ENCODE measurements at regions of chr10 and their contacts with region 1.

Region 1: DNA sequence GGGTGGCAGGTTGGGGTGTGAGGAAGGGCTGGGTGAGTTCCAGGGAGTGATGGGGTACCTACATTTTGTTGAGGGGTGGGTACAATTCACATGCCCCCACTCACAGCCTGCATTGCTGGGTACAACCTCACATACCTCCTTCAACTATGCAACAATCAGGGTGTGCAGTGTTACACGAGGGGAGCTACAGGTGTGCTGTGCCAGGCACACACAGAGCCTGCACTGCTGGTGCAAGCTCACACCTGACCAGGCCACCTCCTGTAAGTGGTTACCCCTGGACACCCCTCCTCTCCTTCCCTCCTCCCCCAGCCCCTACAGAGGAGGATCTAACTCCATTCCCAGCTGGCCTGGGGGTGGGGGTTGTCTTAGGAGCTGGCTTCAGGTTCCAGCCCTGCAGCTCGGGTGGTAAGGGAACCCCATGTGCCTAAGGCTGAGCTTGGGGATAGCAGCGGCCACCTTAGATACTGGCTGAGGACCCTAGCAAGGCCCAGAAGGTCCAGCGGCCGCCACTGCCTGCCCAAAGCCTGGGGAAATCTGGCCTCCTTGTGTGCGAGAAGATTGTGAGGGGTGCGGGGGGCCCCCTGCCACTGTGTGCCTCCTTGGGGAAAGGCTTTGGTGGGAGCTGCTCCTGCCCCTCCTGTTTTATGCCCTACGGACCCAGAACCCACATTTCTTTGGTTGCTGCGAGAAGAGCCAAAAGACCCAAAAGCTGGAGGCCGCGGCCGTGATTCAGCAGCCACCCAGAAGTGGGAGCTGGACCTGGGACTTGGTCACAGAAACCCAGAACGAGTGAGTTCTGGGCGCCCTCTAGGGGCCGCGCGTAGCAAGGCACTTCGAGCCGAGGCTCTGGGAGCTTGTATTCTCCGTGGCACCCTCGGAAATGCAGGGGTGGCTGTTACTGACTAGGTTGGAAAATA is 10.8 kb downstream of the TLX1 start:
- DNase-seq: peak; percentile 88
- ATAC-seq: peak; percentile 88
- H3K4me3 ChIP-seq: no peak overlapping the region
- H3K4me3 Mint-ChIP-seq: no peak overlapping the region
- H3K27ac ChIP-seq: no peak overlapping the region
- H3K27ac Mint-ChIP-seq: no peak overlapping the region
- H3K4me1 ChIP-seq: peaks cover 34 to 46% of the 10 kb centered on the region in 2 donors
- H3K4me1 Mint-ChIP-seq: peaks cover 24% of the 10 kb centered on the region
- H3K27me3 ChIP-seq: peaks cover 0 to 92% (median 68%) of the 10 kb centered on the region in 4 experiments
- H3K27me3 Mint-ChIP-seq: peaks cover 73% of the 10 kb centered on the region
- CTCF ChIP-seq: peak; percentile 98

Region 2: GRCh38 chr10:101031128-101031795 is 110.6 kb before region 1 on chr10 and contains the starts of genes PDZD7 and SFXN3:
- CTCF ChIA-PET with region 1: interaction called, 10 read pairs
- POLR2A ChIA-PET with region 1: no interaction called
- intact Hi-C with region 1: no loop called
- DNase-seq: peak; percentile 95
- ATAC-seq: peak; percentile 89
- H3K4me3 ChIP-seq: peak within 1 kb of the TSS; percentile 26 to 96 (median 79)
- H3K4me3 Mint-ChIP-seq: peak within 1 kb of the TSS; percentile 88
- H3K27ac ChIP-seq: peak within 1 kb of the TSS; percentile 63 to 65
- H3K27ac Mint-ChIP-seq: peak within 1 kb of the TSS; percentile 90
- H3K4me1 ChIP-seq: peaks cover 14 to 26% of the 10 kb centered on the region in 2 donors
- H3K4me1 Mint-ChIP-seq: peaks cover 19% of the 10 kb centered on the region
- H3K27me3 ChIP-seq: peaks cover 0 to 29% (median 13%) of the 10 kb centered on the region in 4 experiments
- H3K27me3 Mint-ChIP-seq: peaks cover 15% of the 10 kb centered on the region
- CTCF ChIP-seq: no peak
- total RNA-seq, gene PDZD7: 0.69 and 0.85 TPM in 2 replicates
- total RNA-seq, gene SFXN3: 38.0 and 44.2 TPM in 2 replicates

Region 3: DNA sequence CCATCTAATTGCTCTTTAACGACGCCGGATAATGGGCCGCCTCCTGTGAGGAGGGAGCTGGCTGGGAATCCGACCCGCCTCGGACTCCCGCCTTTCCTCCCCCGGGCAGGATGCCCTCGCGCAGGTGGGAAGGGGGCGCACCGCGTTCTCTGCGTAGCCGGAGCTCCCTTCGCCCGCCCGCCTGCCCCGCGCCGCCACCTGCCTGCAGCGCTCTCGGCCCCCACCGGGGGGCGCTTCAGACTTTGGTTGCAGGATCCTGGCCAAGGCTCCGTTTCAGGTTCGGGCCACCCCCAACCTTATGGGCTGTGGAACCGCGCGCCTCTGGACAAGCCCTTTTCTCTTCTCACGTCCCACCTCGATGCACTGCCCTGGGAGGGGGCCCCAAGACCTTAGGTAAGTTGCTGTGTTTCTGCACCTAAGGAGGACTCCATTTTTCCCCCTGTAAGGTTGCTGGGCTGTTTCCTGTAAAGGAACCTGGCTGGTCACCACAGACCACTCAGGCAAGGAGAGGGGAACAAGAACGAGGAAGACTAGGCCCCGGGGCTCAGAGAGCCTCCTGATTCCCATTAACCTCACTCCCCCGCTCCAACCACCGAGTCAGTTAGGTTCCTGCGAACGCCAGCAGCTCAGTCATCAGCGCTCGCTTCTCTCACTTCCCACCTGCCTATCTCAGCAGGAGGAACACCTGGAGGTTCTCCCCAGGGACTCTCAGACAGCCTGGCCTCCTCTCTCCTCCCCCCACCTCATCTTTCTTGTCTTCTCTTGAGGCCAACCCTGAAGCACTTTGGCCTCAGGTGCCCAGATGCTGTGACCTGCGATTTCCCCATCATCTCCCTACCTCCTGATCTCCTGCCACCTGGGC is 91.4 kb before region 1 on chr10:
- CTCF ChIA-PET with region 1: interaction called, 127 read pairs
- POLR2A ChIA-PET with region 1: no interaction called
- intact Hi-C with region 1: no loop called
- DNase-seq: peak; percentile 84
- ATAC-seq: peak; percentile 96
- H3K4me3 ChIP-seq: peak overlapping the region in 2 of 5 experiments; percentile 13 to 41
- H3K4me3 Mint-ChIP-seq: peak overlapping the region; percentile 53
- H3K27ac ChIP-seq: no peak overlapping the region
- H3K27ac Mint-ChIP-seq: no peak overlapping the region
- H3K4me1 ChIP-seq: peaks cover 9 to 11% of the 10 kb centered on the region in 2 donors
- H3K4me1 Mint-ChIP-seq: peaks cover 16% of the 10 kb centered on the region
- H3K27me3 ChIP-seq: peaks cover 0 to 50% (median 24%) of the 10 kb centered on the region in 4 experiments
- H3K27me3 Mint-ChIP-seq: peaks cover 37% of the 10 kb centered on the region
- CTCF ChIP-seq: peak; percentile 87

Region 4: GRCh38 chr10:101075775-101076174 is 66.1 kb before region 1 on chr10:
- CTCF ChIA-PET with region 1: interaction called, 17 read pairs
- POLR2A ChIA-PET with region 1: no interaction called
- intact Hi-C with region 1: no loop called
- DNase-seq: no peak
- ATAC-seq: no peak
- H3K4me3 ChIP-seq: no peak overlapping the region
- H3K4me3 Mint-ChIP-seq: no peak overlapping the region
- H3K27ac ChIP-seq: no peak overlapping the region
- H3K27ac Mint-ChIP-seq: no peak overlapping the region
- H3K4me1 ChIP-seq: peaks cover 22 to 31% of the 10 kb centered on the region in 2 donors
- H3K4me1 Mint-ChIP-seq: peaks cover 24% of the 10 kb centered on the region
- H3K27me3 ChIP-seq: peaks cover 0 to 45% (median 24%) of the 10 kb centered on the region in 4 experiments
- H3K27me3 Mint-ChIP-seq: peaks cover 44% of the 10 kb centered on the region
- CTCF ChIP-seq: no peak

Region 5: GRCh38 chr10:101120884-101121653 is 20.8 kb before region 1 on chr10:
- CTCF ChIA-PET with region 1: interaction called, 24 read pairs
- POLR2A ChIA-PET with region 1: interaction called, 3 read pairs
- intact Hi-C with region 1: no loop called
- DNase-seq: peak; percentile 68
- ATAC-seq: peak; percentile 83
- H3K4me3 ChIP-seq: peak overlapping the region; percentile 51 to 91 (median 68)
- H3K4me3 Mint-ChIP-seq: peak overlapping the region; percentile 94
- H3K27ac ChIP-seq: no peak overlapping the region
- H3K27ac Mint-ChIP-seq: peak overlapping the region; percentile 82
- H3K4me1 ChIP-seq: peaks cover 32% of the 10 kb centered on the region in 2 donors
- H3K4me1 Mint-ChIP-seq: peaks cover 33% of the 10 kb centered on the region
- H3K27me3 ChIP-seq: peaks cover 0 to 67% (median 43%) of the 10 kb centered on the region in 4 experiments
- H3K27me3 Mint-ChIP-seq: peaks cover 52% of the 10 kb centered on the region
- CTCF ChIP-seq: no peak

Region 6: GRCh38 chr10:101161494-101162299 is 19.8 kb after region 1 on chr10:
- CTCF ChIA-PET with region 1: interaction called, 63 read pairs
- POLR2A ChIA-PET with region 1: no interaction called
- intact Hi-C with region 1: no loop called
- DNase-seq: peak; percentile 82
- ATAC-seq: peak; percentile 88
- H3K4me3 ChIP-seq: no peak overlapping the region
- H3K4me3 Mint-ChIP-seq: peak overlapping the region; percentile 18
- H3K27ac ChIP-seq: no peak overlapping the region
- H3K27ac Mint-ChIP-seq: no peak overlapping the region
- H3K4me1 ChIP-seq: peaks cover 4 to 15% of the 10 kb centered on the region in 2 donors
- H3K4me1 Mint-ChIP-seq: peaks cover 16% of the 10 kb centered on the region
- H3K27me3 ChIP-seq: peaks cover 0 to 54% (median 34%) of the 10 kb centered on the region in 4 experiments
- H3K27me3 Mint-ChIP-seq: peaks cover 69% of the 10 kb centered on the region
- CTCF ChIP-seq: peak; percentile 96

Measured in B cell (primary cell).